CD4-positive, alpha-beta T cell (primary cell): ENCODE measurements at regions of chr12 and their contacts with region 1.

Region 1: DNA sequence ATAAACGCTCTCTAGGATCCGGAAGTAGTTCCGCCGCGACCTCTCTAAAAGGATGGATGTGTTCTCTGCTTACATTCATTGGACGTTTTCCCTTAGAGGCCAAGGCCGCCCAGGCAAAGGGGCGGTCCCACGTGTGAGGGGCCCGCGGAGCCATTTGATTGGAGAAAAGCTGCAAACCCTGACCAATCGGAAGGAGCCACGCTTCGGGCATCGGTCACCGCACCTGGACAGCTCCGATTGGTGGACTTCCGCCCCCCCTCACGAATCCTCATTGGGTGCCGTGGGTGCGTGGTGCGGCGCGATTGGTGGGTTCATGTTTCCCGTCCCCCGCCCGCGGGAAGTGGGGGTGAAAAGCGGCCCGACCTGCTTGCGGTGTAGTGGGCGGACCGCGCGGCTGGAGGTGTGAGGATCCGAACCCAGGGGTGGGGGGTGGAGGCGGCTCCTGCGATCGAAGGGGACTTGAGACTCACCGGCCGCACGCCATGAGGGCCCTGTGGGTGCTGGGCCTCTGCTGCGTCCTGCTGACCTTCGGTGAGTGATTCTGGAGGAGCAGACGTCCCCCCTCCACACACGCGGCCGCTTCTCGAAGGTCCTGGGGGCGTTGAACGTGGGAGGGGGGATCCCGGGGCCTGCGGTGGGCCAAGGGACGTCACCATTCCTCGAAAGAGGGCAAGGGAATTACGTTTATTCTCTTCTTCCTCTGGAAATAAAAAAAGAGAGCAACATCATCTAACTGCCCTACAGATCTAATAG is at the start of gene HSP90B1:
- DNase-seq: peak; percentile 98 to 100 (median 99)
- ATAC-seq: peak; percentile 74
- H3K4me3 ChIP-seq: peak within 1 kb of the TSS; percentile 92
- H3K4me3 Mint-ChIP-seq: peak within 1 kb of the TSS; percentile 95
- H3K27ac ChIP-seq: peak within 1 kb of the TSS; percentile 95 to 98
- H3K27ac Mint-ChIP-seq: peak within 1 kb of the TSS; percentile 97
- H3K4me1 ChIP-seq: peaks cover 50% of the 10 kb centered on the region
- H3K4me1 Mint-ChIP-seq: peaks cover 76% of the 10 kb centered on the region
- H3K27me3 ChIP-seq: no peaks in the 10 kb centered on the region
- H3K27me3 Mint-ChIP-seq: peaks cover 4% of the 10 kb centered on the region
- CTCF ChIP-seq: no peak
- total RNA-seq, gene HSP90B1: 201 to 212 TPM

Region 2: DNA sequence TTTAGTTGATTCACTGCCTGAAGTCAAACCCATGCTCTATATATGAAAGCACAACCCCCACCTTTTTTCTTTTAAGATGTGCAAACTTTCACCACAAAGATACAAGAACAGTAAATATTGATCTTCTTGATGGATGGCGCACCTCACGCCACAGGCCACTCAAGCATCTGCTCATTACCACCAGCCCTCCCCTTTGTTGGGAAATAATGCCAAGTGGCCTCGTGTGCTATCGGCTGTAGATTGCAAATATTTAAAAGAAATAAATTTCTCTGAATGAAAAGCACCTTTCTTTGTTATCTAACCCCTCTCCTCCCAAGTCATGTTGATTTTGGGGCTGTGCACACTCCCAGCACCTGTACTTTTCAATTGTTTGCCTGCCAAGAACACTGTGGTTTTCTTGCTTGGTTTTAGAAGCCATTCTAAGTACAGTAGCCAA is 557.1 kb before region 1 on chr12:
- CTCF ChIA-PET with region 1: no interaction called
- POLR2A ChIA-PET with region 1: no interaction called
- intact Hi-C with region 1: no loop called
- DNase-seq: no peak
- ATAC-seq: no peak
- H3K4me3 ChIP-seq: no peak overlapping the region
- H3K4me3 Mint-ChIP-seq: peak overlapping the region; percentile 11
- H3K27ac ChIP-seq: peak overlapping the region in 1 of 2 donors; percentile 5
- H3K27ac Mint-ChIP-seq: peak overlapping the region; percentile 8
- H3K4me1 ChIP-seq: no peaks in the 10 kb centered on the region
- H3K4me1 Mint-ChIP-seq: peaks cover 19% of the 10 kb centered on the region
- H3K27me3 ChIP-seq: no peaks in the 10 kb centered on the region
- H3K27me3 Mint-ChIP-seq: no peaks in the 10 kb centered on the region
- CTCF ChIP-seq: no peak

Region 3: GRCh38 chr12:103884316-103884715 is 45.9 kb before region 1 on chr12:
- CTCF ChIA-PET with region 1: interaction called, 7 read pairs
- POLR2A ChIA-PET with region 1: interaction called, 49 read pairs
- intact Hi-C with region 1: loop called (anchors 1 to 2 kb)
- DNase-seq: peak; percentile 17 to 75 (median 37)
- ATAC-seq: peak; percentile 78
- H3K4me3 ChIP-seq: no peak overlapping the region
- H3K4me3 Mint-ChIP-seq: no peak overlapping the region
- H3K27ac ChIP-seq: no peak overlapping the region
- H3K27ac Mint-ChIP-seq: no peak overlapping the region
- H3K4me1 ChIP-seq: peaks cover 2% of the 10 kb centered on the region
- H3K4me1 Mint-ChIP-seq: peaks cover 6% of the 10 kb centered on the region
- H3K27me3 ChIP-seq: no peaks in the 10 kb centered on the region
- H3K27me3 Mint-ChIP-seq: no peaks in the 10 kb centered on the region
- CTCF ChIP-seq: peak; percentile 75

Region 4: GRCh38 chr12:103908866-103909265 is 21.3 kb before region 1 on chr12:
- CTCF ChIA-PET with region 1: no interaction called
- POLR2A ChIA-PET with region 1: interaction called, 208 read pairs
- intact Hi-C with region 1: loop called in 1 of 2 experiments (anchors 2 kb)
- DNase-seq: no peak
- ATAC-seq: no peak
- H3K4me3 ChIP-seq: no peak overlapping the region
- H3K4me3 Mint-ChIP-seq: peak overlapping the region; percentile 9
- H3K27ac ChIP-seq: no peak overlapping the region
- H3K27ac Mint-ChIP-seq: peak overlapping the region; percentile 88
- H3K4me1 ChIP-seq: peaks cover 30% of the 10 kb centered on the region
- H3K4me1 Mint-ChIP-seq: peaks cover 53% of the 10 kb centered on the region
- H3K27me3 ChIP-seq: no peaks in the 10 kb centered on the region
- H3K27me3 Mint-ChIP-seq: no peaks in the 10 kb centered on the region
- CTCF ChIP-seq: no peak

Region 5: DNA sequence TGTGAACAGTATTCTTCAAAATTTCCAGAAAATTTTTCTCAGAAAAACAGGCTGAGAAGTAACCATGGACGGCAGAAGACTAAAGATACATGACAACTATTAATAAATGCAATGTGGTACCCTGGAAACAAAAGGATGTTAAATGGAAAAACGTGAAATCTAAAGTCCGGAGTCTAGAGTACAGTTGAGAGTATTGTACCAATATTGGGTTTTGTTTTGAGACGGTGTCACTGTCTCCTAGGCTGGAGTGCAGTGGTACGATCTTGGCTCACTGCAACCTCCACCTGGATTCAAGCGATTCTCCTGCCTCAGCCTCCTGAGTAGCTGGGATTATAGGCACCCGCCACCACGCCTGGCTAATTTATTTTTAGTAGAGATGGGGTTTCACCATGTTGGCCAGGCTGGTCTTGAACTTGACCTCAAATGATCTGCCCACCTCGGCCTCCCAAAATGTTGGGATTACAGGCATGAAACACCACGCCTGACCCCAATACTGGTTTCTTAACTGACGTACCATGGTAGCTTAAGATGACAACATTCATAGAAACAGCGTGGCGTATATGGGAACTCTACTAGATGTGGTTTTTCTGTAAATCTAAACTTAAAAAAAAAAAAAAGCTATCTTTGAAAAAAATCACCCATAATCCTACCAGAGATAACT is 18.7 kb after region 1 on chr12:
- CTCF ChIA-PET with region 1: no interaction called
- POLR2A ChIA-PET with region 1: interaction called, 75 read pairs
- intact Hi-C with region 1: no loop called
- DNase-seq: no peak
- ATAC-seq: peak; percentile 24
- H3K4me3 ChIP-seq: no peak overlapping the region
- H3K4me3 Mint-ChIP-seq: no peak overlapping the region
- H3K27ac ChIP-seq: no peak overlapping the region
- H3K27ac Mint-ChIP-seq: peak overlapping the region; percentile 60
- H3K4me1 ChIP-seq: no peaks in the 10 kb centered on the region
- H3K4me1 Mint-ChIP-seq: peaks cover 17% of the 10 kb centered on the region
- H3K27me3 ChIP-seq: no peaks in the 10 kb centered on the region
- H3K27me3 Mint-ChIP-seq: no peaks in the 10 kb centered on the region
- CTCF ChIP-seq: no peak

Region 6: DNA sequence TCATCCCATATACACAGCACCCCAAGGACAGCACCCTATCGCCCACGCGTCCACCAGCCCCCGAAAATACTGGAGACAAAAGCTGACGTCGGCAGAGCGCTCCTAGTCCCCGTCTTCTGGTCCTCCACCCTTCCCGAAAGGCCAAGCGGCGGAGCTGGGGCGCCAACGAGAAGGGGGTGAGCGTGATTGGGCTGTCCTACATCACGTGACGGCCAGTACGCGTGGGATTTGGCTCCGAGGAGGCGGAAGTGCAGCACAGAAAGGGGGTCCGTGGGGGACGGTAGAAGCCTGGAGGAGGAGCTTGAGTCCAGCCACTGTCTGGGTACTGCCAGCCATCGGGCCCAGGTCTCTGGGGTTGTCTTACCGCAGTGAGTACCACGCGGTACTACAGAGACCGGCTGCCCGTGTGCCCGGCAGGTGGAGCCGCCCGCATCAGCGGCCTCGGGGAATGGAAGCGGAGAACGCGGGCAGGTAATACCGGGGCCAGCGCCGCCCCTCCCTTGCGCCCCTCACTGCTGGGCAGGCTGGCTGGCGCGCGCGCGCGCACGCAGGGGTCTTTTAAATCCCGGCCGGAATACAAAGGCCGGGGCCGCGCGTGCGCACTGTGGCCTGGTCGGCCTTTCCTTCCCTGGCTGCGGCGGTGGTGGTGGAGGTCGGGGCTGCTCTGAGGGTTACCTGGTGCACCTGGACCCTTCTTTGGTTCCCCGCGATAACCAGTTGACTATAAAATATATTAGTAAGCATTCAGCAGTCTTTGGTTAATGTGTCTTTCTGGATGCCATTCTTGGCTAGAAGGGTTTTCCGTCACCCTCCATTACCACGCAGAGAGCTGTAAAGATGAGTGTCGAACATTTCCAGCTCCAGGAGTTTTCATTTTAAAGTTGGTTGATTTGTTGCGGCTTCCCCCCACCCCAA is 35.6 kb after region 1 on chr12 and contains the start of gene TDG:
- CTCF ChIA-PET with region 1: interaction called, 6 read pairs
- POLR2A ChIA-PET with region 1: interaction called, 213 read pairs
- intact Hi-C with region 1: loop called (anchors 1 kb)
- DNase-seq: peak; percentile 89 to 99 (median 95)
- ATAC-seq: peak; percentile 94
- H3K4me3 ChIP-seq: peak within 1 kb of the TSS; percentile 62
- H3K4me3 Mint-ChIP-seq: peak within 1 kb of the TSS; percentile 94
- H3K27ac ChIP-seq: peak within 1 kb of the TSS; percentile 74 to 91
- H3K27ac Mint-ChIP-seq: peak within 1 kb of the TSS; percentile 95
- H3K4me1 ChIP-seq: peaks cover 32% of the 10 kb centered on the region
- H3K4me1 Mint-ChIP-seq: peaks cover 57% of the 10 kb centered on the region
- H3K27me3 ChIP-seq: no peaks in the 10 kb centered on the region
- H3K27me3 Mint-ChIP-seq: no peaks in the 10 kb centered on the region
- CTCF ChIP-seq: peak; percentile 18
- total RNA-seq, gene TDG: 27.5 to 29.6 TPM

Region 7: GRCh38 chr12:104108755-104109445 is 178.7 kb after region 1 on chr12:
- CTCF ChIA-PET with region 1: interaction called, 4 read pairs
- POLR2A ChIA-PET with region 1: interaction called, 10 read pairs
- intact Hi-C with region 1: no loop called
- DNase-seq: peak; percentile 77 to 92 (median 84)
- ATAC-seq: peak; percentile 100
- H3K4me3 ChIP-seq: no peak overlapping the region
- H3K4me3 Mint-ChIP-seq: peak overlapping the region; percentile 59
- H3K27ac ChIP-seq: no peak overlapping the region
- H3K27ac Mint-ChIP-seq: peak overlapping the region; percentile 24
- H3K4me1 ChIP-seq: no peaks in the 10 kb centered on the region
- H3K4me1 Mint-ChIP-seq: peaks cover 14% of the 10 kb centered on the region
- H3K27me3 ChIP-seq: no peaks in the 10 kb centered on the region
- H3K27me3 Mint-ChIP-seq: no peaks in the 10 kb centered on the region
- CTCF ChIP-seq: peak; percentile 89

Region 8: GRCh38 chr12:104286538-104287482 is 356.6 kb after region 1 on chr12:
- CTCF ChIA-PET with region 1: no interaction called
- POLR2A ChIA-PET with region 1: interaction called, 7 read pairs
- intact Hi-C with region 1: loop called in 1 of 2 experiments (anchors 10 kb)
- DNase-seq: peak; percentile 70 to 96 (median 86)
- ATAC-seq: peak; percentile 84
- H3K4me3 ChIP-seq: peak overlapping the region; percentile 90
- H3K4me3 Mint-ChIP-seq: peak overlapping the region; percentile 98
- H3K27ac ChIP-seq: peak overlapping the region; percentile 67 to 84
- H3K27ac Mint-ChIP-seq: peak overlapping the region; percentile 96
- H3K4me1 ChIP-seq: peaks cover 35% of the 10 kb centered on the region
- H3K4me1 Mint-ChIP-seq: peaks cover 35% of the 10 kb centered on the region
- H3K27me3 ChIP-seq: peaks cover 0 to 7% of the 10 kb centered on the region in 2 experiments
- H3K27me3 Mint-ChIP-seq: no peaks in the 10 kb centered on the region
- CTCF ChIP-seq: no peak